Caco-2 (cell line): ENCODE measurements at regions of chr9 and their contacts with region 1.

Region 1: GRCh38 chr9:96418074-96418809 is at the start of gene ZNF367:
- DNase-seq: peak; percentile 98
- H3K4me3 ChIP-seq: peak within 1 kb of the TSS; percentile 67
- H3K4me3 Mint-ChIP-seq: peak within 1 kb of the TSS; percentile 94
- H3K27ac Mint-ChIP-seq: peak within 1 kb of the TSS; percentile 94
- H3K4me1 ChIP-seq: peaks cover 19% of the 10 kb centered on the region
- H3K4me1 Mint-ChIP-seq: peaks cover 17% of the 10 kb centered on the region
- H3K27me3 ChIP-seq: no peaks in the 10 kb centered on the region
- H3K27me3 Mint-ChIP-seq: no peaks in the 10 kb centered on the region
- CTCF ChIP-seq: no peak
- total RNA-seq, gene ZNF367: 9.3 and 10.0 TPM in 2 replicates

Region 2: DNA sequence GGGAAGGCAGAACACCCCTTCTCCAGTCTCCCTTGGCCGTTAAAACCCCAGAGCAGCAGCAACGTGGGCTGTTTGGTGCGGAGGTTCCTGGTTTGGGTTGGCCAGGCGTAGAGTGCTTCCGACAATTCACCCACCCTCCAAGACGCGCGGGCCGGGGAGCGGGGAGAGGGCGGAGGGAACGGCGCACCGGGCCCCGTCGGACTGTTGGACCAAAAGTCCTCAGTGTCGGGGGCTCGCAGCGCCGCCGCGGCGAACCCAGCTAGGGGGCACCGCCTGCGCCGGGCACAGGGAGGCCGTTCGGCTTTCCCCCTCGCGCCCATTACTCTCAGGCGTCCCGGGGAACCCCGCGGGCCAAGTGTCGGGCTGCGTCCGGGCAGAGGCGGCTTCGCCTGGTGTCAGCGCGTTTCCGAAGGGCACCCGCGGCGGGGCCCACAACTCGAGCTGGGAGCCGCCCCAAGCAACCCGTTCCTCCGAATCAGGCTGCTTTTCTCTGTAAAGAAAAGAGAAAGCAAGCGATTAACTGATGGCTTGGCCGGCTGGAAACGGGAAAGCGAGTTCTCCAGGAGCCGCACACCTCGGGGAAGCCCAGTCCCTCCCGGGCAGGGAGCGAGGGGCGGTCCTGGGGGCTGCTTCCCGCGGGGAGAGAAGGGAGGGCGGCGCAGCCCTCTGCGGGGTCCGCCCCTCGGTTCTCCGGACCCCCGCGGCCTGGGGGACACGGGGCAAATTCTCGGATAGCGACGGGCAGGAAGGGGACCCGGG is 397.3 kb before region 1 on chr9:
- CTCF ChIA-PET with region 1: no interaction called
- POLR2A ChIA-PET with region 1: no interaction called
- intact Hi-C with region 1: no loop called
- DNase-seq: peak in 1 of 2 experiments; percentile 32
- H3K4me3 ChIP-seq: peak overlapping the region; percentile 56
- H3K4me3 Mint-ChIP-seq: peak overlapping the region; percentile 83
- H3K27ac Mint-ChIP-seq: no peak overlapping the region
- H3K4me1 ChIP-seq: no peaks in the 10 kb centered on the region
- H3K4me1 Mint-ChIP-seq: no peaks in the 10 kb centered on the region
- H3K27me3 ChIP-seq: no peaks in the 10 kb centered on the region
- H3K27me3 Mint-ChIP-seq: no peaks in the 10 kb centered on the region
- CTCF ChIP-seq: no peak

Region 3: GRCh38 chr9:96327694-96328352 is 90.4 kb before region 1 on chr9:
- CTCF ChIA-PET with region 1: no interaction called
- POLR2A ChIA-PET with region 1: no interaction called
- intact Hi-C with region 1: loop called (anchors 1 kb)
- DNase-seq: peak; percentile 52 to 70
- H3K4me3 ChIP-seq: no peak overlapping the region
- H3K4me3 Mint-ChIP-seq: no peak overlapping the region
- H3K27ac Mint-ChIP-seq: no peak overlapping the region
- H3K4me1 ChIP-seq: no peaks in the 10 kb centered on the region
- H3K4me1 Mint-ChIP-seq: peaks cover 9% of the 10 kb centered on the region
- H3K27me3 ChIP-seq: no peaks in the 10 kb centered on the region
- H3K27me3 Mint-ChIP-seq: no peaks in the 10 kb centered on the region
- CTCF ChIP-seq: peak; percentile 74 to 87

Region 4: DNA sequence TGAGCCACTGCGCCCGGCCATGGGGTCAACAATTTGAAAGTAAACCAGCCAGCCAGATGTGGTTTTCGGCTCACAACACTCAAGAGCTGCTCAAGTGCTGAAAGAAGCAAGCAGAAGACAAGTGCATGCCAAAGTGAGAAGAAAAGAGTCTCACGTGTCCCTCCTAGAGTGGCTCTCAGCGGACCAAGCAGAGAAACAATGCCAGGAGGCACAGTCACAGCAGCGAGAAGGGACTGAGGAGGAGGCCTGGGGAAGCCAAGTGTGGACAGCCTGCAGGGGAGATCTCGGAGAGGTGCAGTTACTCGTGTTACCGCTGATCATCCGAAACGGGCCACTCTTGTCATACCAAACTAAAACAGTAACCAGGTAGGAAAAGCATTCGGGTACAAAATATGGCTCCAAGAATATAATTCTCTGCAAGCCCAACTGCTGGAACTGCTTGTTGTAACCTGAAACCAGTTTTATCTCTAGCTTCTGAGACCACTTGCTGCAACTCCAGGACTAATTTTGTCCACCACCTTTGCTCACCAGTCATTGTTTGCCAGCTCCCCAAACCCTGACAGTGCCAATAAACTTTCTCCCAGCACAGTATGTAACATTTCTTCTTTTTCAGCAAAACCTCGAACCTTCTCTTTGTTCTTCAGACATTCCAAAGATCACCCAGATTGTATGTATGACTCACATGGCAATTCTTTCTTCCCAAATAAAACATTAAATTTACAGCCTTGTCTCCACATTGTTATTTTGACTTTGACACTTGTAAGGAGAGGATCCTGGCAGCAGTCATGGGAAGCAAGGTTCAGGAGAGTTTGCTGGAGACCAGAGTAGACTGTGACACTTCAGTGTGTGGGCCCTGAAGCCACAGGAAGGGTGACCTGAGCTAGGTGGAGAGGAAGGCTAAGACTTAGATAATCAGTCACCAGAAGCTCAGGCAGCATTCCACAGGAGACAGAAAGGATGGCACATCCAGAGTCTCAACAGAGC is 41.1 kb before region 1 on chr9:
- CTCF ChIA-PET with region 1: no interaction called
- POLR2A ChIA-PET with region 1: no interaction called
- intact Hi-C with region 1: loop called (anchors 5 kb)
- DNase-seq: peak; percentile 44 to 56
- H3K4me3 ChIP-seq: no peak overlapping the region
- H3K4me3 Mint-ChIP-seq: peak overlapping the region; percentile 48
- H3K27ac Mint-ChIP-seq: peak overlapping the region; percentile 84
- H3K4me1 ChIP-seq: peaks cover 35% of the 10 kb centered on the region
- H3K4me1 Mint-ChIP-seq: peaks cover 36% of the 10 kb centered on the region
- H3K27me3 ChIP-seq: no peaks in the 10 kb centered on the region
- H3K27me3 Mint-ChIP-seq: no peaks in the 10 kb centered on the region
- CTCF ChIP-seq: no peak

Region 5: DNA sequence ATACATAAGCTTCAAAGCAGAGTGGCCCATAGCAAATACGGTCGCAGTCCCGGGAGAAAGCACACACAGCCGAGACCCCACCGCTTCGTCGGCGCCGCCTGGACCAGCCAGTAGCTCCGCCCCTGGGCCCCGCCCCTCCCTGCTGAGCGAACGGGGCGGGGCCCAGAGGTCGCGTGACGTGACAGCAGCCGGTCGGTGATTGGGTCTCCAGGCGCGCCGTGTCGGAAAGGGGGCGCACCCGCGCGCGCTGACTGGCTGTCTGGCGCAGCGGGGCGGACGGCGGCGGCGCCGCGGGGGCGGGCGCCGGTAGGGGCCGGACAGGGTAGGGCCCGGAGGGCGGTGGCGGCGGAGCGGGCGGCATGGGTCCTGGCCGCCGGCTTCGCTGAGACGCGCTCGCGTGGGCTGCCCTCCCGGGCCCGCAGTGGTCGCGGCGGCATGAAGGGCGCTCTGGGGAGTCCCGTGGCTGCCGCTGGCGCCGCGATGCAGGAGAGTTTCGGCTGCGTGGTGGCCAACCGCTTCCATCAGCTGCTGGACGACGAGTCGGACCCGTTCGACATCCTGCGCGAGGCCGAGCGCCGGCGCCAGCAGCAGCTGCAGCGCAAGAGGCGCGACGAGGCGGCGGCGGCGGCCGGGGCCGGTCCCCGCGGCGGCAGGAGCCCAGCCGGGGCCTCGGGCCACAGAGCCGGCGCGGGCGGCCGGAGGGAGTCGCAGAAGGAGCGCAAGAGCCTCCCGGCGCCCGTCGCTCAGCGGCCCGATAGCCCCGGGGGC is 31.8 kb after region 1 on chr9 and contains the start of gene HABP4:
- CTCF ChIA-PET with region 1: interaction called, 4 read pairs
- POLR2A ChIA-PET with region 1: interaction called, 6 read pairs
- intact Hi-C with region 1: loop called (anchors 2 kb)
- DNase-seq: peak; percentile 95 to 97
- H3K4me3 ChIP-seq: peak within 1 kb of the TSS; percentile 89
- H3K4me3 Mint-ChIP-seq: peak within 1 kb of the TSS; percentile 93
- H3K27ac Mint-ChIP-seq: peak within 1 kb of the TSS; percentile 76
- H3K4me1 ChIP-seq: 0 out of 2 replicates have a peak, but pooled peaks cover 3% of the 10 kb centered on the region
- H3K4me1 Mint-ChIP-seq: peaks cover 12% of the 10 kb centered on the region
- H3K27me3 ChIP-seq: no peaks in the 10 kb centered on the region
- H3K27me3 Mint-ChIP-seq: no peaks in the 10 kb centered on the region
- CTCF ChIP-seq: no peak
- total RNA-seq, gene HABP4: 24.8 and 26.7 TPM in 2 replicates